ENCODE measurements at regions of chr3 and their contacts with region 1.

Region 1: GRCh38 chr3:172224560-172225214 is 185.3 kb downstream of the FNDC3B start:
- DNase-seq: no peak
- H3K4me3 ChIP-seq: no peak overlapping the region
- CTCF ChIP-seq: no peak

Region 2: GRCh38 chr3:172039436-172040077 is 185.1 kb before region 1 on chr3 and contains the start of gene FNDC3B:
- in situ Hi-C with region 1: no loop called
- DNase-seq: peak; percentile 92
- H3K4me3 ChIP-seq: peak within 1 kb of the TSS; percentile 96
- CTCF ChIP-seq: no peak

Region 3: DNA sequence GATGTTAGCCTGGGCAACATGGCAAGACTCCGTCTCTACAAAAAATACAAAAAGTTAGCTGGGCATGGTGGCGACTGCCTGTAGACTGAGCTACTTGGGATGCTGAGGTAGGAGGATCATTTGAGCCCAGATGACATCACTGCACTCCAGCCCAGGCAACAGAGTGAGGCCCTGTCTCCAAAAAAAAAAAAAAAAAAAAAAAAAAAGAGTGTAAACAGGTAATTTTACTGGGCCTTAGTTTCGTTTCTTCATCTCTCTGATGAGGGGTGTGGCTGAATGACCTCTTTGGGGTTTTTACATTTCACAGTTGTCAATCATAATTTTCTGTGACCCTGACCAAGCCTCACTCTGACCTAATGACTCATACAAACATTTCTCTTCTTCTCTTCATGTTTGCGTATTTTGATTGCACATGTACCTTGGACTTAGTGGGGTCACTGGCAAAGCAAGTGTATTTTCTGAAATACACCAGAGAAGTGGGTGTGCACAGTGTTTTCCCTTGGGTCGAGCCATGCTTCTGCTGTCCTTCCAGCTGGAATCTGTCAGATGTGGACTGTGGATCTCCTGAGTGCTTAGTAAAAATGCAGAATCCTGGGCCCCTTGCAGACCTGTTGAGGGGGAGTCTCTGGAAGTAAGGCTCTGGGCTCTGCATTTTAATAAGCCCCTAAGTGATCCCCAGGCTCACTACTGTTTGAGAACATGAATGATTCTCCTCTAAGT is 44.8 kb before region 1 on chr3:
- in situ Hi-C with region 1: loop called (anchors 5 kb)
- DNase-seq: no peak
- H3K4me3 ChIP-seq: no peak overlapping the region
- CTCF ChIP-seq: no peak

Region 4: GRCh38 chr3:172294223-172294806 is 69.6 kb after region 1 on chr3:
- in situ Hi-C with region 1: loop called (anchors 5 kb)
- DNase-seq: no peak
- H3K4me3 ChIP-seq: no peak overlapping the region
- CTCF ChIP-seq: no peak

Region 5: DNA sequence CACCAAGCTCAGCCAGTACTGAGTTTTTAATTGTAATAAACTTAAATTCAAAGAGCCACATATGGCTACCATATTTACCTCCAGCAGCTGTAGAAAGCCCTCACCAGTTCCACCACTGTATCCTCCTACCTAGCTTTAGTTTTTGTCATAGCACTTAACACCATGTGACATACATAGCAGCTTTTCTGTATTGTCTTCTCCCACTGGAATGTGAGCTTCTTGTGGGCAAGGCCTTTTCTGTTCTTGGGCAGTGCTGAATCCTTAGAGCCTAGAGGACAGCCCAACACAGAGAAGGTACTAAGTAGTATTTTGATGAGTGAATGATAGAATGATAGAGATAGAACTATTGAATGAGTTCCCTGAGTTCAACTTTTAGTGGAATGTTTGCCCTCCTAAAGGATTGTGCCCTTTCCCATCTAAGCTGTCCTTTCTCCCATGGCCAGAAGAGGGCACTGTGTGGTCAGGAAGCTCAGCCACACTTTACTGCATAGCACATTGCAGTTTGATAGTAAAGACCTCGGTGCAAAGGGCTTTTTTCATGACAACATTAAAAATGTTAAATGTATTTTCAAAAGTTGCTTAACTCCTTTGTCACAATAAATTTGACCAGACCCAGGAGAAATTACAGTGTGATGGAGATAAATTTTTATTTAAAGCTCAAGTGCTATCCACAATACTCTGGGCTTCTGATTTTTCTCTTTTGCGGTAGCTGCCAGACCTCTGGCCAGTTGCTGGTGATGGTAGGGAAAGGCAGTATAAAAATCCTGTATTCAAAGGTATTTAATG is 107.8 kb after region 1 on chr3:
- in situ Hi-C with region 1: no loop called
- DNase-seq: peak; percentile 47
- H3K4me3 ChIP-seq: no peak overlapping the region
- CTCF ChIP-seq: peak; percentile 95